ENCODE measurements at regions of chr11 and their contacts with region 1.

Region 1: DNA sequence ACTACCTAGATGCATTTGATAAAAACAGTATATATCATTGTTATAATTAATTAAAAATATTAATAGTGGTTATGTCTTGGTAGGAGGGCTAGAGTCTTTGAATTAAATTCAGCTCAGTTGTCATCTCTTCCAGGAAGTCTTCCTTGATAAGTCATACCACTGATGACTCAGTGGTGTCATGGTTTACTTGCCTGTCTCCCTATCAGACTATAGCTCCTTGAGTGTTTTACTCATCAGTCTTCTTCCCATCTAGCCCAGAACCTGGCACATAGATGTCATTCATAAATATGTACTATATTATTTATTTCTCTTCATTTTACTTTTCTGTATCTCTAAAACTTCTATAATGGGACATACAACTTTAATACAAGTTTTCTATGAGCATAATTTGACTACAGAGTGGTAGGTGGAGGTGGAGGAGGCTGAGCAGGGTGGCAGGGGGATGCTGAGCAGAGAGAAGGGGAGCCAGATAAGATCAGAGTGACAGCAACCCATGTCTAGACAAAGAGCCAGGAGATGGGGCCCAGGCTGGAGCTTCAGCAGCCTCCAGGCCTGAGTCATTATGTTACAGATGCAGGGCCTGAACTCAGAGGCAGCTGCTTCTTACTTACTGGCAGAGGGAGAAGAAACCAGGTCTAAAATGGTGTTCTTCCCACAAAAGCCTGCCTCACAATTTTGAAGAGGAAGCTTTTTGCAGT is 82.3 kb upstream of the PHOX2A start:
- DNase-seq: no peak
- H3K4me3 Mint-ChIP-seq: peak overlapping the region; percentile 11
- H3K27ac Mint-ChIP-seq: peak overlapping the region; percentile 96
- H3K4me1 Mint-ChIP-seq: peaks cover 45% of the 10 kb centered on the region
- H3K27me3 Mint-ChIP-seq: no peaks in the 10 kb centered on the region

Region 2: GRCh38 chr11:72352859-72353551 is 26.7 kb after region 1 on chr11:
- intact Hi-C with region 1: loop called (anchors 1 kb)
- DNase-seq: no peak
- H3K4me3 Mint-ChIP-seq: no peak overlapping the region
- H3K27ac Mint-ChIP-seq: no peak overlapping the region
- H3K4me1 Mint-ChIP-seq: no peaks in the 10 kb centered on the region
- H3K27me3 Mint-ChIP-seq: no peaks in the 10 kb centered on the region

Measured in activated T-helper 2 cell treated with anti-CD3 and anti-CD28 coated beads, Interferon-gamma antibody, Interleukin-2, Interleukin-4, amounts not matched to agents 10 μg/mL and 5 μg/mL and 100 μg/mL, durations not matched to agents 14 hours and 24 hours and 36 hours (primary cell).